Activated CD8-positive, alpha-beta T cell treated with anti-CD3 and anti-CD28 coated beads, Interleukin-2, amount 10 ng/mL, durations not matched to agents 7 days and 5 days (primary cell): ENCODE measurements at regions of chr10 and their contacts with region 1.

Region 1: DNA sequence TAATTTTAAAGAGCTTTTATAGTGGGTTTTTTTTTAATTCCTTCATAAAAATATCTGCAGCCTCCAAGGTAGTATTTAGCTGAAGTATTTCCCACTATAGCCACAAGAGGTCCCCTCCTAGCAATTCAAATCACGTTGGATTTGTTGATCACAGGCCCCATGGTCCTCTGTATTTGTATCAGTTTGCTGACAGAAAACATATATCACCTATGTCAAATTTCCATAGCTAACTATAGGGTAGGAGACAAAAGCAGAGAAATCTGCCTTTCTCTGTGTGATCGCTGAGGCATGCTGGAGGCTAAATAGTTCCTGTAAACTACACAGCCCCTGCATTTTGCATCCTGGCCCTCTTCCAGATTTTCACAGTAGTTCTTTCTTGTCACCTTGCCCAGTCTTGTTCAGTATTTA is 1.7 kb upstream of the CTNNA3 start:
- DNase-seq: peak; percentile 42
- ATAC-seq: peak; percentile 79
- H3K4me3 Mint-ChIP-seq: no peak overlapping the region
- H3K27ac Mint-ChIP-seq: no peak overlapping the region
- H3K4me1 Mint-ChIP-seq: peaks cover 10% of the 10 kb centered on the region
- H3K27me3 Mint-ChIP-seq: peaks cover 36% of the 10 kb centered on the region

Region 2: DNA sequence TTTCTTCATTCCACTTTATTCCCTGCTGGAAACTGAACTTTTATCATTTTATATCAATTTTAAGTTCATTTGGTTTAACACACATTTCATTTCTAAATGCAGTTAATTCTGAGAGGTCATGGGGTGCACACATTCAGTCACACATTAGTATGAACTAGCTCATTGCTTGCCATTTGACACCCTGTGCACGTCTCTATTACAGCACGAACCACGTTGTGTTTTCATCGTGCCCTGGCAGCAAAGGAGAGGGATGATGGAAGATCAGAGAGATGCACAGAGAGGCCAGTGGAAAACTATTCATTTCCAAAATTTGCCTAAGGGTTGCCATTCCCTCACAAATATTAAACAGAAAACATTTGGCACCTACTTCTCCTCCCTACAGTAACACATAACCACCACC is 47.2 kb before region 1 on chr10:
- CTCF ChIA-PET with region 1: no interaction called
- POLR2A ChIA-PET with region 1: no interaction called
- DNase-seq: no peak
- ATAC-seq: no peak
- H3K4me3 Mint-ChIP-seq: no peak overlapping the region
- H3K27ac Mint-ChIP-seq: no peak overlapping the region
- H3K4me1 Mint-ChIP-seq: no peaks in the 10 kb centered on the region
- H3K27me3 Mint-ChIP-seq: peaks cover 5% of the 10 kb centered on the region

Region 3: GRCh38 chr10:67666416-67667034 is 31.2 kb before region 1 on chr10:
- CTCF ChIA-PET with region 1: interaction called, 33 read pairs
- POLR2A ChIA-PET with region 1: no interaction called
- DNase-seq: no peak
- ATAC-seq: no peak
- H3K4me3 Mint-ChIP-seq: no peak overlapping the region
- H3K27ac Mint-ChIP-seq: no peak overlapping the region
- H3K4me1 Mint-ChIP-seq: no peaks in the 10 kb centered on the region
- H3K27me3 Mint-ChIP-seq: peaks cover 3% of the 10 kb centered on the region

Region 4: GRCh38 chr10:67678335-67678974 is 19.3 kb before region 1 on chr10:
- CTCF ChIA-PET with region 1: no interaction called
- POLR2A ChIA-PET with region 1: no interaction called
- DNase-seq: no peak
- ATAC-seq: no peak
- H3K4me3 Mint-ChIP-seq: no peak overlapping the region
- H3K27ac Mint-ChIP-seq: no peak overlapping the region
- H3K4me1 Mint-ChIP-seq: no peaks in the 10 kb centered on the region
- H3K27me3 Mint-ChIP-seq: peaks cover 29% of the 10 kb centered on the region

Region 5: GRCh38 chr10:67764012-67764822 is 66.5 kb after region 1 on chr10:
- CTCF ChIA-PET with region 1: interaction called, 22 read pairs
- POLR2A ChIA-PET with region 1: interaction called, 6 read pairs
- DNase-seq: peak; percentile 97
- ATAC-seq: peak; percentile 85
- H3K4me3 Mint-ChIP-seq: peak overlapping the region; percentile 86
- H3K27ac Mint-ChIP-seq: peak overlapping the region; percentile 98
- H3K4me1 Mint-ChIP-seq: peaks cover 31% of the 10 kb centered on the region
- H3K27me3 Mint-ChIP-seq: peaks cover 2% of the 10 kb centered on the region

Region 6: GRCh38 chr10:67772894-67773511 is 75.3 kb after region 1 on chr10:
- CTCF ChIA-PET with region 1: interaction called, 295 read pairs
- POLR2A ChIA-PET with region 1: no interaction called
- DNase-seq: no peak
- ATAC-seq: peak; percentile 61
- H3K4me3 Mint-ChIP-seq: no peak overlapping the region
- H3K27ac Mint-ChIP-seq: peak overlapping the region; percentile 46
- H3K4me1 Mint-ChIP-seq: peaks cover 54% of the 10 kb centered on the region
- H3K27me3 Mint-ChIP-seq: no peaks in the 10 kb centered on the region